ENCODE measurements at regions of chr15 and their contacts with region 1.

Region 1: GRCh38 chr15:92714477-92715401 is 59.2 kb upstream of the FAM174B start:
- DNase-seq: peak; percentile 33 to 71
- ATAC-seq: peak; percentile 86

Region 2: GRCh38 chr15:92097474-92098178 is 617.1 kb before region 1 on chr15:
- intact Hi-C with region 1: loop called in 1 of 2 experiments (anchors 5 kb)
- DNase-seq: peak in 1 of 2 donors; percentile 52
- ATAC-seq: peak; percentile 96